PC-9 (cell line): ENCODE measurements at regions of chr1 and their contacts with region 1.

Region 1: DNA sequence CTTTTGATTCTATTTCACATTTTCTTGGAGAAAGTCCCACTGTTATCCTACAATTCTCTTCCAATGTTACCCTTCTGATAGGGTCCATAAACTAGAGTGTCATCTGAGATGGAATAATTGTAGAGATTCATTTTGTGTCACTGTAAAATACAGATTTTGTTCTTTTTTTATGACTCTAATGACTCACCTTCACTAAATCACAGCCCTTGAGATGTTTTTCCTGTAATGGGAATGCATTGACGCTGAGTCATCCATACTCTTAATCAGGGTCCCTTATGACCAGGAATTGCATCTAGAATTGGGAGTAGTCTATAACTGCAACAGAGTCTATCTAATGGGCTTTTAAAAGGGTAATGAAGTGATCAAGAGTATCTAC is 315.5 kb downstream of the TGFB2 start:
- DNase-seq: peak; percentile 23 to 84
- H3K4me3 ChIP-seq: no peak overlapping the region
- H3K27ac ChIP-seq: peak overlapping the region; percentile 81
- H3K4me1 ChIP-seq: peaks cover 44% of the 10 kb centered on the region
- H3K27me3 ChIP-seq: no peaks in the 10 kb centered on the region
- CTCF ChIP-seq: no peak

Region 2: GRCh38 chr1:218459878-218460711 is 200.6 kb before region 1 on chr1:
- CTCF ChIA-PET with region 1: no interaction called
- POLR2A ChIA-PET with region 1: no interaction called
- intact Hi-C with region 1: loop called (anchors 1 kb)
- DNase-seq: peak; percentile 68 to 93
- H3K4me3 ChIP-seq: no peak overlapping the region
- H3K27ac ChIP-seq: peak overlapping the region; percentile 63
- H3K4me1 ChIP-seq: peaks cover 14% of the 10 kb centered on the region
- H3K27me3 ChIP-seq: no peaks in the 10 kb centered on the region
- CTCF ChIP-seq: no peak

Region 3: GRCh38 chr1:218482683-218483082 is 178.0 kb before region 1 on chr1:
- CTCF ChIA-PET with region 1: no interaction called
- POLR2A ChIA-PET with region 1: no interaction called
- intact Hi-C with region 1: no loop called
- DNase-seq: no peak
- H3K4me3 ChIP-seq: no peak overlapping the region
- H3K27ac ChIP-seq: no peak overlapping the region
- H3K4me1 ChIP-seq: peaks cover 49% of the 10 kb centered on the region
- H3K27me3 ChIP-seq: no peaks in the 10 kb centered on the region
- CTCF ChIP-seq: no peak